WTC11 (cell line): ENCODE measurements at regions of chr2 and their contacts with region 1.

Region 1: DNA sequence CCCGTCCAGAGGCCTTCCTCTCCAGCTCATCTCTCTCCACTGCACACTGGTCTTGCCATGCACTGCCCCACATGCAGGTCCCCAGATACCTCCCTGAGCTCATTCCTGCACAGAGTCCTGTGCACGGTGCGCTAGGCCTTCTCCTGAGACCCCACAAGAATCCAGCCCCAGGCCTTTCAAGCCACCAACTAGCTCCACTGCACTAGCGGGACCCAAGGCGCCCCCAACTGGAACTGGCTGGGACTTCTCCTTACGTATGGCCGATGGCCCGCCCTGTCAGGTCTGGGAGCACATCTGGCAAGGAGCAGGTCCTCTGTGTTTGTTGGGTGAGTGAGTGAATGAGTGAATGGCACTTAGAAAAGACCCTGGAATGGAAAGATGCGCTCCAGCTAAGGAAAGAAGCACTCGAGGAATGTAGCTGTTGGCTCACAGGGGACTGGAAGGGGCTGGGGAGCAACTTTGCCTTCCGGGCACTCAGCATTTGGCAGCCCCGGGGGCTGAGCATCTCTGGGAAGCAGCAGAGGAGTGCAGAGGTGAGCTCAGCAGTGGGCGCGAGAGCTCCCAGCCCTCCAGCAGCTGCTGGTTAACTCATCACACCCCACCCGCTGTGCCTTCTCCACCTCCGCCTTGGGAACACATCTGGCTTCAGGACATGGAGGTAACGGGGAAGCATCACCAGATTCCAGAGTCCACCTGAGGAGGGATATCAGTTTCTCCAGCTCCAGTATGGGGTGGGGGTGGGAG is 223.1 kb downstream of the GLI2 start:
- DNase-seq: peak; percentile 88
- ATAC-seq: peak; percentile 86
- H3K4me3 Mint-ChIP-seq: no peak overlapping the region
- H3K27ac Mint-ChIP-seq: peak overlapping the region; percentile 39; the same call in 1 of the 2 replicates
- H3K4me1 Mint-ChIP-seq: 0 out of 2 replicates have a peak, but pooled peaks cover 3% of the 10 kb centered on the region
- H3K27me3 Mint-ChIP-seq: no peaks in the 10 kb centered on the region
- CTCF ChIP-seq: peak; percentile 62

Region 2: GRCh38 chr2:120702061-120702460 is 256.7 kb before region 1 on chr2:
- CTCF ChIA-PET with region 1: interaction called, 10 read pairs
- POLR2A ChIA-PET with region 1: no interaction called
- DNase-seq: no peak
- ATAC-seq: no peak
- H3K4me3 Mint-ChIP-seq: no peak overlapping the region
- H3K27ac Mint-ChIP-seq: no peak overlapping the region
- H3K4me1 Mint-ChIP-seq: peaks cover 57% of the 10 kb centered on the region
- H3K27me3 Mint-ChIP-seq: peaks cover 40% of the 10 kb centered on the region
- CTCF ChIP-seq: no peak

Region 3: GRCh38 chr2:120833127-120833675 is 125.6 kb before region 1 on chr2:
- CTCF ChIA-PET with region 1: interaction called, 15 read pairs
- POLR2A ChIA-PET with region 1: no interaction called
- DNase-seq: peak; percentile 39
- ATAC-seq: peak; percentile 67
- H3K4me3 Mint-ChIP-seq: no peak overlapping the region
- H3K27ac Mint-ChIP-seq: peak overlapping the region; percentile 89
- H3K4me1 Mint-ChIP-seq: peaks cover 32% of the 10 kb centered on the region
- H3K27me3 Mint-ChIP-seq: no peaks in the 10 kb centered on the region
- CTCF ChIP-seq: no peak